Testis (tissue), 5 donors: ENCODE measurements at regions of chr10 and their contacts with region 1.

Region 1: DNA sequence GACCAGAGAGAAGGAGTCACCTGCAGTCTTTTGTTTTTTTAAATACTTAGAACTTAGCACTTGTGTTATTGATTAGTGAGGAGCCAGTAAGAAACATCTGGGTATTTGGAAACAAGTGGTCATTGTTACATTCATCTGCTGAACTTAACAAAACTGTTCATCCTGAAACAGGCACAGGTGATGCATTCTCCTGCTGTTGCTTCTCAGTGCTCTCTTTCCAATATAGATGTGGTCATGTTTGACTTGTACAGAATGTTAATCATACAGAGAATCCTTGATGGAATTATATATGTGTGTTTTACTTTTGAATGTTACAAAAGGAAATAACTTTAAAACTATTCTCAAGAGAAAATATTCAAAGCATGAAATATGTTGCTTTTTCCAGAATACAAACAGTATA is 13.5 kb downstream of the GHITM start:
- DNase-seq: no peak
- H3K4me3 ChIP-seq: no peak overlapping the region
- H3K27ac ChIP-seq: no peak overlapping the region
- H3K4me1 ChIP-seq: no peaks in the 10 kb centered on the region
- H3K27me3 ChIP-seq: no peaks in the 10 kb centered on the region
- CTCF ChIP-seq: no peak
- POLR2A ChIP-seq: no peak

Region 2: GRCh38 chr10:84244651-84245270 is 92.0 kb after region 1 on chr10 and contains the start of gene RGR:
- intact Hi-C with region 1: loop called (anchors 5 kb)
- DNase-seq: no peak
- H3K4me3 ChIP-seq: no peak within 1 kb of the TSS
- H3K27ac ChIP-seq: no peak within 1 kb of the TSS
- H3K4me1 ChIP-seq: no peaks in the 10 kb centered on the region
- H3K27me3 ChIP-seq: no peaks in the 10 kb centered on the region
- CTCF ChIP-seq: no peak
- POLR2A ChIP-seq: no peak
- total RNA-seq, gene RGR: 3.7 to 5.9 TPM